ENCODE measurements at regions of chr5 and their contacts with region 1.

Region 1: DNA sequence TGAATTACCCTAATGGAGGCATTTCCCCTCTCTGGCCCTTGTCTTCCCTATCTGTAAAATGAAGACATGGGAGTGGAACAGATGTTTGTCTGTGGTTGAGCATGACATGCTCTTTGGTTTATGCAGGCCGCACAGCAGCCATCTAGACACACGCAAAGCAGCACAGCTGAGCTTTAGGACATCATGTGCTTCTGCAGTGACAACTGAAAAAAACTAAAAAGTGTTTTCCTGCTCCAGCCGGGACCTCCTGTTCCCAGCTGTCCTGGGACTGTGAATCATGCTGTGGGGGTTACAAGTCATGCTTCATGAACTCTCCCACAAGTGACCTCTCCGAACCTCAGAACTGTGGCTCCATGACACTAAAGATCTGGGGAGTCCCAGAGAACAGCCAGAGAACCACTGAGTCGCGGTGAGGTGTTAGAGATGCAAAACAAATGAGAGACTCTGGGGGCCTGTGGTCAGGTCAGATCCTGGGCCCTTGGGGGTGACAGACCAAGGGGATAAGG is 1.7 kb downstream of the SMIM3 start:
- DNase-seq: peak; percentile 58 to 80
- H3K4me3 ChIP-seq: peak overlapping the region; percentile 84 to 91
- H3K27ac ChIP-seq: peak overlapping the region; percentile 96 to 97
- H3K4me1 ChIP-seq: peaks cover 5 to 67% (median 56%) of the 10 kb centered on the region in 4 donors
- H3K27me3 ChIP-seq: no peaks in the 10 kb centered on the region
- CTCF ChIP-seq: no peak

Region 2: GRCh38 chr5:150758531-150759333 is 21.5 kb before region 1 on chr5 and contains the start of gene DCTN4:
- intact Hi-C with region 1: loop called (anchors 1 kb)
- DNase-seq: peak; percentile 96 to 98
- H3K4me3 ChIP-seq: peak within 1 kb of the TSS; percentile 62
- H3K27ac ChIP-seq: peak within 1 kb of the TSS; percentile 86 to 91
- H3K4me1 ChIP-seq: peaks cover 0 to 29% (median 15%) of the 10 kb centered on the region in 4 donors
- H3K27me3 ChIP-seq: peaks cover 0 to 2% of the 10 kb centered on the region in 2 donors
- CTCF ChIP-seq: peak in 1 of 2 experiments; percentile 16

Region 3: DNA sequence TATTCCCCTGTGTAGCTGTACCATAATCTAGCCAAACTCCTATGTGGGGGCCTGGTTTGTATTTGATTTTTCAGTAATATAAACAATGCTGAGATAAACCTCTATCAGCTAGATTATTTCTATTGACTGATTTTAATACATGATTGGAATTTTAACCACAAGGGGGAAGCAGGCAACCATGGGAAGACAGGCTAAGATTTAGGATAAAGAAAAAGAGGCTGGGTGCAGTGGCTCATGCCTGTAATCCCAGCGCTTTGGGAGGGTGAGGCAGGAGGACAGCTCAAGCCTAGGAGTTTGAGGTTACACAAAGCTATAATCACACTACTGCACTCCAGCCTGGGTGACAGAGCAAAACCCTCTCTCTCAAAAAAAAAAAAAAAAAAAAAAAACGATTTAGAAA is 222.0 kb after region 1 on chr5:
- intact Hi-C with region 1: no loop called
- DNase-seq: no peak
- H3K4me3 ChIP-seq: no peak overlapping the region
- H3K27ac ChIP-seq: no peak overlapping the region
- H3K4me1 ChIP-seq: peaks cover 0 to 40% (median 33%) of the 10 kb centered on the region in 4 donors
- H3K27me3 ChIP-seq: no peaks in the 10 kb centered on the region
- CTCF ChIP-seq: peak; percentile 62 to 78